ENCODE measurements at regions of chr15 and their contacts with region 1.

Region 1: DNA sequence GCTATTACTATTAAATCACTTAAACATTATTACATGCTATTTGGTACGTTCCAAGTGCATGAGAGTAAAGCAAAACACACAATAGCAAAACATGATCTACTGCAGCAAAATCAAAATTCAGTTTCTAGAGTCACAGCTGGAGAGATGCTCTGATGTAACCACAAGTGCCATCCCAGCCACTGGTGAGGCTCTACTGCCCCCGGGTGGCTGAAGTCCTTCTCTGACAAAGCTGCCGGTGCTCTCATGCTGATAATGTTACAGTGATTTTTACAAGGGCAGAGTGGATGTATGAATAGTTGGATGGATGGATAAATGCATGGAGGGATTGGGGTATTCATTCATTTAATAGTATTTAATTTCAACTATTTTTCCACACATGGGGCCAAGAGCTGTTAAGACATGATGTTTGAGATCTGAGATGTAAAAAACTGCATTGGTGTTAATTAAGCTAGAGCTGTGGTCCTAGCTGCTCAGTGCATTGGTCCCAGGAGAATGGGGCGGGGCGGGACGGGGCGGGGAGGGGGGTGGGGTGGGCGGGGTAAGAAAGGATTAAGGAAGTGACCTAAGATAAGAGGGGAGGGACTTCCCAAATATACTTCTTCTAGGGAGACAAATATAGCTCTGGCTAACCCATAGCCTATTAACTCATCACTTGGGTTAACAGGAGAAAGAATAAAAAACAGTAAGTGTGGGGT is 5.3 kb upstream of the SPESP1 start:
- DNase-seq: peak; percentile 44
- ATAC-seq: peak; percentile 78
- H3K4me3 ChIP-seq: no peak overlapping the region
- H3K27ac ChIP-seq: no peak overlapping the region
- H3K4me1 ChIP-seq: no peaks in the 10 kb centered on the region
- H3K27me3 ChIP-seq: no peaks in the 10 kb centered on the region
- CTCF ChIP-seq: peak; percentile 88
- EP300 ChIP-seq: no peak
- POLR2A ChIP-seq: no peak
- RAD21 ChIP-seq: peak; percentile 86

Region 2: GRCh38 chr15:68559345-68560310 is 365.4 kb before region 1 on chr15:
- CTCF ChIA-PET with region 1: interaction called, 5 read pairs
- POLR2A ChIA-PET with region 1: no interaction called
- in situ Hi-C with region 1: loop called (anchors 10 kb)
- intact Hi-C with region 1: no loop called
- DNase-seq: peak; percentile 33
- ATAC-seq: peak; percentile 93
- H3K4me3 ChIP-seq: no peak overlapping the region
- H3K27ac ChIP-seq: no peak overlapping the region
- H3K4me1 ChIP-seq: peaks cover 4% of the 10 kb centered on the region; the same call in 1 of the 2 replicates
- H3K27me3 ChIP-seq: peaks cover 3 to 12% of the 10 kb centered on the region in 2 experiments; a peak in 2 of 5 replicates
- CTCF ChIP-seq: peak; percentile 96
- EP300 ChIP-seq: no peak
- POLR2A ChIP-seq: no peak
- RAD21 ChIP-seq: peak; percentile 74

Region 3: DNA sequence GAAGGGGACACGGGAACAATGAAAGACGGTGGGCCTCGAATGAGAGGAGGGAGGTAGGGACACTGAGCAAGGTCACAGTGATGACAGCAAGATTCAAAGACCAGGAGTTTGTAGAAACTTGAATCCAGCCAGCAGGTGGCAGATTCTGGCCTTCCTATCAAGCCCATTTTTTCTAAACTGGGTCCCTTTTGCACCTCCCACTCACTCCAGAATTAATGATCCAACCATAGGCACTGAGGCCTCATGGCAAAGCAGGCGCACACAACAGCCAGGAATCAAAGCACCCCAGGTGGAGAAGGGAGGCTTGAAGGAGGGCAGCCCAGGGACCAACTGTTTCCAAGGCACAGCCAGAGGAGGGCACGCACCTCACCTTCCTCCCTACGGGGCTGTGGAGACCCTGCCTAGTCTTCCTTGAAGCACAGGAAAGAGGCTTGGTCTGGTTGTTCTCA is 194.5 kb before region 1 on chr15:
- CTCF ChIA-PET with region 1: interaction called, 7 read pairs
- POLR2A ChIA-PET with region 1: no interaction called
- in situ Hi-C with region 1: no loop called
- intact Hi-C with region 1: loop called (anchors 2 kb)
- DNase-seq: peak; percentile 21
- ATAC-seq: peak; percentile 71
- H3K4me3 ChIP-seq: no peak overlapping the region
- H3K27ac ChIP-seq: no peak overlapping the region
- H3K4me1 ChIP-seq: no peaks in the 10 kb centered on the region
- H3K27me3 ChIP-seq: peaks cover 2 to 34% of the 10 kb centered on the region in 2 experiments; a peak in 4 of 5 replicates
- CTCF ChIP-seq: peak; percentile 64
- EP300 ChIP-seq: no peak
- POLR2A ChIP-seq: no peak
- RAD21 ChIP-seq: peak; percentile 42; the same call in 1 of the 2 replicates

Region 4: DNA sequence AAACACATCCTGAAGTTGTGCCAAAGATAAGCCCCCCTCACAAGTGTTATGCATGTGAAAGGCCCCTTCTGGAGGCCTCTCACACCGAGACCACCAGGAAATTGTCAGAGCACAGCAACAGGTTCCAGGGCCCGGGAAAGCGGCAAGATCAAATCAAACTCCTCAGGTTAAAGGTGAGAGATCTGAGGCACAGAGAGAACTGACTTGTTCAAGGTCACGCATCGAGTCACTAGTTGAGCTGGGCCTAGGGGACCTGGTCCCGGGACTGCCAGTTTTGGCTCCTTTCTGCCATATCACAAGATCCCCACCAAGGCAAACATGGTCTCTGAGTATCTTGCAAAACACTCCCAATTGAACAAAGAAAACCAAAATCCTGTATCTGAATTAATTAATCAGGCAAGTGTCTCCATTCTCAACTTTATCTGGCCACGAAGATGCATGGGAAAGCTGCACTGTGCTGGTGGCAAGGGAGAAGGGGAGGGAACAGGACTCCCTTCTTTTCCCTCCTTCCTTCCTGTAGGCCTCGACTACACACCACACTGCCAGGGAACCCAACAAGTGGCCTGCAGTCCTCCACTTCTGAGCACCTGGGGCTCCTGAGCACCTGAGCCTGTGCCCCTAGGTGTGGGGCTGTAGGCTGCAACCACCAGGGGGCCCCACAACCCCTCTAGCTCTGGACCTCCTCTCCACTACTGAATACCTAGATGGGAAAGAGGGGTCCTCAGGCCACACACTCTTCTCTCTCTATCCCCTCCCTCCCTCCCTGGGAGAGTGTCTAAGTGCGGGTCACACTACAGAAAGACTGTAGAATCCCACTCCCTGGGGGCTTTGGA is 141.6 kb before region 1 on chr15:
- CTCF ChIA-PET with region 1: interaction called, 6 read pairs
- POLR2A ChIA-PET with region 1: no interaction called
- in situ Hi-C with region 1: no loop called
- intact Hi-C with region 1: loop called (anchors 1 kb)
- DNase-seq: peak; percentile 19
- ATAC-seq: peak; percentile 93
- H3K4me3 ChIP-seq: no peak overlapping the region
- H3K27ac ChIP-seq: no peak overlapping the region
- H3K4me1 ChIP-seq: no peaks in the 10 kb centered on the region
- H3K27me3 ChIP-seq: no peaks in the 10 kb centered on the region
- CTCF ChIP-seq: peak; percentile 73
- EP300 ChIP-seq: no peak
- POLR2A ChIP-seq: no peak
- RAD21 ChIP-seq: peak; percentile 62; the same call in 1 of the 2 replicates

Region 5: DNA sequence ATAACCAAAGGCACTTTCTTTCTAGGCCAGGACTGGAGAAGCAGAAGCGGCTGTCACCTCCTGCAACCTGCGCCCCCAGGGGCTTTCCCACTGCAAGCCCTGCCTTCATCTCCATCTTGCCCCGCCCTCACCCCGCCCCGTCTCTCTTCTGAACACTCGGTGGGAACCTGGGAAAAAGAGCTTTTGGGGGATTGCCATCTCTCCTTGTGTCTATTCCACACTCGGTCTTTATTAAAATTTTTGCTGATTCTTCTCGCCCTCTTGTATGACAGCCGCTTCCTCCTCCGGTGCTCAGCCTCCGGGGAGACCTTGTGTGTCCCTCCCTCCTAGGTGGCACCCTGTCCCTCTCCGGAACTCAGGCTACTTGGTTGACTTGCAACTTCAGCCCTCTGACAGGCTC is 36.6 kb before region 1 on chr15:
- CTCF ChIA-PET with region 1: no interaction called
- POLR2A ChIA-PET with region 1: no interaction called
- in situ Hi-C with region 1: no loop called
- intact Hi-C with region 1: no loop called
- DNase-seq: no peak
- ATAC-seq: no peak
- H3K4me3 ChIP-seq: no peak overlapping the region
- H3K27ac ChIP-seq: no peak overlapping the region
- H3K4me1 ChIP-seq: no peaks in the 10 kb centered on the region
- H3K27me3 ChIP-seq: peaks cover 2 to 30% of the 10 kb centered on the region in 2 experiments
- CTCF ChIP-seq: no peak
- EP300 ChIP-seq: no peak
- POLR2A ChIP-seq: no peak
- RAD21 ChIP-seq: no peak

Measured in HepG2 (cell line).